Breast epithelium (tissue), 4 donors: ENCODE measurements at regions of chr10 and their contacts with region 1.

Region 1: GRCh38 chr10:119320981-119321380 is 113.6 kb downstream of the GRK5 start:
- DNase-seq: no peak
- H3K4me3 ChIP-seq: no peak overlapping the region
- H3K27ac ChIP-seq: no peak overlapping the region
- H3K4me1 ChIP-seq: no peaks in the 10 kb centered on the region
- H3K27me3 ChIP-seq: no peaks in the 10 kb centered on the region
- CTCF ChIP-seq: no peak
- POLR2A ChIP-seq: no peak

Region 2: DNA sequence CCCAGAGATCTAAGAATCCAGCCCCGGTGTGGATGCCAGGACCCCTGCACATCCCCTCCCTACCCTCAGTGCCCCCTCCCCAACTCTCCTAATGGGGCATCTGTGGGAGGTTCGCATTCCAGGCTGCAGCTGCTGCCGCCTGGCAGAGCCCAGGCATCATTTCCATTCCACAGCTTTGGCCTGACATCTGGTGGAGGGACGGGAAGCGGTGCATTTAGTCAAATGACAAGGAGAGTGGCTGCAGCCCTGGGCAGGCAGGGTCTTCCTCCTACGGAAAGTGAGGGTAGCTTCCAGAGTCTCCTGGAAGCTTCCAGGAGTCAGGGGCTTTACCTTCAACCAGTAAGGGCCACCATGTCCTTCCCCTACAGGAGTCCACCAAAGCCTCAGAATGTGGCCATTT is 756.3 kb before region 1 on chr10:
- intact Hi-C with region 1: loop called (anchors 5 kb)
- DNase-seq: no peak
- H3K4me3 ChIP-seq: no peak overlapping the region
- H3K27ac ChIP-seq: no peak overlapping the region
- H3K4me1 ChIP-seq: no peaks in the 10 kb centered on the region
- H3K27me3 ChIP-seq: no peaks in the 10 kb centered on the region
- CTCF ChIP-seq: no peak
- POLR2A ChIP-seq: no peak

Region 3: GRCh38 chr10:118692872-118693271 is 628.1 kb before region 1 on chr10:
- intact Hi-C with region 1: no loop called
- DNase-seq: no peak
- H3K4me3 ChIP-seq: no peak overlapping the region
- H3K27ac ChIP-seq: no peak overlapping the region
- H3K4me1 ChIP-seq: no peaks in the 10 kb centered on the region
- H3K27me3 ChIP-seq: no peaks in the 10 kb centered on the region
- CTCF ChIP-seq: no peak
- POLR2A ChIP-seq: no peak

Region 4: GRCh38 chr10:119383174-119383856 is 62.3 kb after region 1 on chr10:
- intact Hi-C with region 1: loop called (anchors 1 kb)
- DNase-seq: no peak
- H3K4me3 ChIP-seq: no peak overlapping the region
- H3K27ac ChIP-seq: no peak overlapping the region
- H3K4me1 ChIP-seq: no peaks in the 10 kb centered on the region
- H3K27me3 ChIP-seq: no peaks in the 10 kb centered on the region
- CTCF ChIP-seq: no peak
- POLR2A ChIP-seq: no peak

Region 5: GRCh38 chr10:119496273-119496672 is 175.3 kb after region 1 on chr10:
- intact Hi-C with region 1: no loop called
- DNase-seq: no peak
- H3K4me3 ChIP-seq: no peak overlapping the region
- H3K27ac ChIP-seq: no peak overlapping the region
- H3K4me1 ChIP-seq: no peaks in the 10 kb centered on the region
- H3K27me3 ChIP-seq: no peaks in the 10 kb centered on the region
- CTCF ChIP-seq: no peak
- POLR2A ChIP-seq: no peak